K562 (cell line): ENCODE measurements at regions of chr14 and their contacts with region 1.

Region 1: DNA sequence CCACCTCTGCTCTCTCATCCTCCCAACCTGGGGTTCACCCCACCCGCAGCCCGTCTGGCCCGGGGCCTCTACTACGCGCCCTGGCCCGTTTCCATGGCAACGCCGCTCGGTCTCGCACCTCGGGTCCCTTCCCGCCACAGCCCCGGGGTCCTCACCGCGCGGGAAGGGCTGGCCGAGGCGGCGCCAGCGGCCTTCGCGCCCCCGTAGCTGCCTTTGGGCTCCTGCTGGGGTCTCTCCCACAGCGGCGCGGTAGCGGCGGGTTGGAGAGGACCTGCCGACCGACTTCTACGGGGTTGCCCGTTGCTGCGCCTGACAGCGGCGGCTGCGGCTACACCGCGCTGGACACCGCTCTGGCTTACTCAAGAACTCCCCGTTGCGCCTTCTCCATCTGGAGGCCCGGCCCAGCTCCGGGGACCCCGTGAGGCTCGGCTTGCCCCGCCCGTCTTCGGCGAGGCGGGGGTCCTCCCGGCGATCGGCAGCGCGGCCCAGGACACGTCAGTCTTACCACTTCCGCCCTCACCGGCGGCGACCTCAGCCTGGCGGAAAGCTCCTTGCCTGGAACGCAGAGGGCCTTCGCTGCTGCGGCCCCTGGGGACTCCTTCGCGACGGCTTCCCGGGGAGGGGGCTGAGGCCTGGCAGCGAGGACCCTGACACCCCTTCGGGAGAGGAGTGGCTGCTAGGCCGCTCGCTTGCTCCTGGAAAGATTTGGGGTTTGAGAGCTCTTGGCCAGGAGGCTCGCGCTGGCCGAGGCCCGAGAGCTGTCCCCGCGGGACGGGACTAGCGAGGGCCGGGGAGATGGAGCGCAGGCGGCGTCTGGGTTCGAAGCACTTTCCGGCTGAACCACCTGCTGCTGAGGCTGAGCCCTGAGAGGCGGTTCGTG is at the start of gene TM9SF1:
- DNase-seq: peak; percentile 81 to 89 (median 84)
- ATAC-seq: peak; percentile 95
- H3K4me3 ChIP-seq: peak within 1 kb of the TSS; percentile 67
- H3K27ac ChIP-seq: peak within 1 kb of the TSS; percentile 97
- H3K4me1 ChIP-seq: peaks cover 6 to 13% of the 10 kb centered on the region in 2 experiments; a peak in 3 of 5 replicates
- H3K27me3 ChIP-seq: no peaks in the 10 kb centered on the region
- CTCF ChIP-seq: no peak; a peak in 1 of 6 replicates
- EP300 ChIP-seq: no peak
- POLR2A ChIP-seq: peak; percentile 80
- RAD21 ChIP-seq: no peak
- polyA plus RNA-seq, gene TM9SF1: 5.3 to 6.3 TPM

Region 2: GRCh38 chr14:24207104-24207551 is 11.7 kb after region 1 on chr14:
- CTCF ChIA-PET with region 1: no interaction called
- POLR2A ChIA-PET with region 1: interaction called, 19 read pairs
- in situ Hi-C with region 1: no loop called
- intact Hi-C with region 1: no loop called
- DNase-seq: no peak
- ATAC-seq: no peak
- H3K4me3 ChIP-seq: no peak overlapping the region
- H3K27ac ChIP-seq: no peak overlapping the region
- H3K4me1 ChIP-seq: peaks cover 8 to 13% of the 10 kb centered on the region in 2 experiments; a peak in 4 of 5 replicates
- H3K27me3 ChIP-seq: no peaks in the 10 kb centered on the region
- CTCF ChIP-seq: no peak
- EP300 ChIP-seq: no peak
- POLR2A ChIP-seq: no peak
- RAD21 ChIP-seq: no peak

Region 3: DNA sequence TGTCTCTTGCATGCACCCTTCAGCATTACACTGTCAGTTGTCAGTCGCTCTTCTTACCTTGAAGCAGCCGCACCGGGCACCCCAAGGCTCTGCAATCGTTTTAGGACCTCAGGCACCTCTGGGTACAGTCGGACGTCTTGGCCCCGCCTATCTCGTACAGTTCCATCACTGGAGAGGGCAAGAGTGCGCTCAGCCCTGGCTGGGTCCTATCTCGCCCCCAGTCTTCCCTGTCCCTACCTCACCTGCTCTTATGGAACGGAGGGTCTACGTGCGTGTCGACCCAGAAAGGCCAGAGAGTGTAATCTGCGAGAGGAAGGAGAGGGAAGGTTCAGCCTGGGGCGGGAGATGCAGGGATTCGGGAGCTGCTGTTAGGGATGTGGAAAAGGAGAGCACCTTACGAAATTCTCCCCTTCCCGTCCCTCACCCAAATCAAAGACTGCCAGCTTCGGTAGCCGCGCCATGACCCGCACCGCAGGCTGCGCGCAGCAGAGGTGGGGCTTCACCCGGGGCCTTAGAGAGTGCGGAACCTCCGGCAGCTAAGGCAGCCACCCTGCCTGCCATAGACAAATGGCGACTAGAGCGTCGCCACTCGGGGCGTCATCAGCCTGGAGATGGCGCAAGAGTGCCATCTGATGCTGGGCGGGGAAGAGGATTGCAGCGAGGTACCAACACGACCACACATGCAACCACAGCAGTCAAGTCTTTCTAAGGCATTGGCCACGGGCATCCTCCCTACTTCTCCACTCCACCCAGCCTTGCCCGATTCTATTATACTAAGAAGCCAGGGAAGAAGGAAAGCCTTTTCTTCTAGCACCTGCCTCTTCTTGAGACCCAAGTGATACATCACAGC is 20.3 kb after region 1 on chr14 and contains the start of gene MDP1:
- CTCF ChIA-PET with region 1: no interaction called
- POLR2A ChIA-PET with region 1: interaction called, 21 read pairs
- in situ Hi-C with region 1: no loop called
- intact Hi-C with region 1: no loop called
- DNase-seq: peak; percentile 75 to 89 (median 78)
- ATAC-seq: peak; percentile 87
- H3K4me3 ChIP-seq: peak within 1 kb of the TSS; percentile 62
- H3K27ac ChIP-seq: peak within 1 kb of the TSS; percentile 71
- H3K4me1 ChIP-seq: peaks cover 4 to 11% of the 10 kb centered on the region in 2 experiments; a peak in 4 of 5 replicates
- H3K27me3 ChIP-seq: no peaks in the 10 kb centered on the region
- CTCF ChIP-seq: peak; percentile 77 to 82 (median 79)
- EP300 ChIP-seq: peak; percentile 38; the same call in 1 of the 2 replicates
- POLR2A ChIP-seq: peak; percentile 86
- RAD21 ChIP-seq: peak; percentile 50 to 61
- polyA plus RNA-seq, gene MDP1: 27.2 to 29.6 TPM

Region 4: GRCh38 chr14:25017562-25017961 is 822.1 kb after region 1 on chr14:
- CTCF ChIA-PET with region 1: no interaction called
- POLR2A ChIA-PET with region 1: no interaction called
- in situ Hi-C with region 1: no loop called
- intact Hi-C with region 1: no loop called
- DNase-seq: no peak
- ATAC-seq: no peak
- H3K4me3 ChIP-seq: no peak overlapping the region
- H3K27ac ChIP-seq: no peak overlapping the region
- H3K4me1 ChIP-seq: no peaks in the 10 kb centered on the region
- H3K27me3 ChIP-seq: no peaks in the 10 kb centered on the region
- CTCF ChIP-seq: no peak
- EP300 ChIP-seq: no peak
- POLR2A ChIP-seq: no peak
- RAD21 ChIP-seq: no peak